Uterus (tissue), 4 donors: ENCODE measurements at regions of chr3 and their contacts with region 1.

Region 1: GRCh38 chr3:9422712-9423424 is 25.5 kb downstream of the SETD5 start:
- DNase-seq: peak; percentile 79 to 93
- H3K4me3 ChIP-seq: peak overlapping the region in 1 of 2 donors; percentile 8
- H3K27ac ChIP-seq: peak overlapping the region; percentile 79 to 89
- H3K4me1 ChIP-seq: peaks cover 0 to 14% of the 10 kb centered on the region in 2 donors
- H3K27me3 ChIP-seq: no peaks in the 10 kb centered on the region
- CTCF ChIP-seq: peak in 3 of 4 experiments; percentile 34 to 58 (median 37)
- POLR2A ChIP-seq: no peak

Region 2: DNA sequence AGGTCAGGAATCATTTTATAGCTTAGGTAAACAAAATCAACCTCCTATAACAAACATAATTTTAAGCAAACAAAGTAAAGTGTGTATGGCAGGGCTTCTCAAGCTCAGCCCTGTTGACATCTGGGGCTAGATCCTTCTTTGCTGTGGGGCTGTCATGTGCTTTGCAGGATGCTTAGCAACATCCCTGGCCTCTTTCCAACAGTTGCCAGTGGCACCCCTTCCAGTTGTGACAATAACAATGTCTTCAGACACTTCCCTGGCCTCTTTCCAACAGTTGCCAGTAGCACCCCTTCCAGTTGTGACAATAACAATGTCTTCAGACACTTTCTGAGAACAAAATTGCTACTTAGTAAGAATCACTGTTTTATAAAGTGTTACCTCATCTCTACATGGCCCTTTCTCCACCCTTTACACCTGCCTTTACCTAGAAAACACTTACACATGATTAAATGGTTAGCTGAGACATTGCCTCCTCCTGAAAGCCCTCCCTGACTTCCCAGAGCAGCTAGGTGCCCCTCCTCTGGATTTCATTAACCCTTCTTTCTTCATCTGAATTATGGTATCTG is 1115.2 kb before region 1 on chr3:
- intact Hi-C with region 1: no loop called
- DNase-seq: no peak
- H3K4me3 ChIP-seq: no peak overlapping the region
- H3K27ac ChIP-seq: no peak overlapping the region
- H3K4me1 ChIP-seq: no peaks in the 10 kb centered on the region
- H3K27me3 ChIP-seq: no peaks in the 10 kb centered on the region
- CTCF ChIP-seq: no peak
- POLR2A ChIP-seq: no peak

Region 3: DNA sequence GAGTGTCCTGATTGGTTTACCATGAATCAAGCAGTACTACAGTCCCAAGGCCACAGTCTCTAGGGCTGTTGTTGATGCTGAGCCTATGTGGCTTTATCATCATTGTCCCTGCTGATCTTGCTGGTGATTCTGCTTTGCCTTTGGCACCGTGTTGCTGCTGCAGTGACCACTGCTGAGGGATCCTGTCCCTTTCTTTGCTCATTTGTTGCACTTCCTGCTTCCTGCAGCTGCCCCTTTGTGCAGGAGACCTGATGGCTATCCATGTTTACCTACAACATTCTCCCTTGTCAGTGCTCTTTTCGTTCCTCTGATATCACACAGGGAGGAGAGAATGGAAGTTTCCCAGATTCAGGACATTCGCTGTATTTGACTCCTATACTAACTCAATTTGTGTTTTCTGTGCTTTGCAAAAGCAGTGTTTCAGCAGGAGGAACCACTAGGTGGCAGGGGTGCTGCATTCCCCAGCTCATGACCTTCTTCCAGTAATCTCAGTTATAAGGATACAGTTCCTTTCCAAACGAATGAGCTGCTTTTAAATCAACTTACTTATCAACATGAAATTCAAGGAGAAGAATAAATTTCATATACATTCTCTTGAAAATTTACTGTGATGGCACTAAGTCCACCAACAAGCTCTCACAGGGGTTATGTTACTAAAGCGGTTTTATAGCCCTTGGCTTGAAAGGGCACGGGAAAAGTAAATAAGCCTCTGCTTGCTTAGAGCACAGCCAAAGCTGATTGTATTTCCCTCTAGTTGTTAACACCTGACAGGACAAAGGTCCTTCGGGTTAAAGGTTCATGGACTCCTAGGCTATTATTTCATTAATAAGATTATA is 69.7 kb before region 1 on chr3:
- intact Hi-C with region 1: loop called (anchors 10 kb)
- DNase-seq: peak; percentile 69 to 72
- H3K4me3 ChIP-seq: no peak overlapping the region
- H3K27ac ChIP-seq: no peak overlapping the region
- H3K4me1 ChIP-seq: no peaks in the 10 kb centered on the region
- H3K27me3 ChIP-seq: no peaks in the 10 kb centered on the region
- CTCF ChIP-seq: peak; percentile 79 to 88 (median 82)
- POLR2A ChIP-seq: no peak